H1 (cell line): ENCODE measurements at regions of chr12 and their contacts with region 1.

Region 1: DNA sequence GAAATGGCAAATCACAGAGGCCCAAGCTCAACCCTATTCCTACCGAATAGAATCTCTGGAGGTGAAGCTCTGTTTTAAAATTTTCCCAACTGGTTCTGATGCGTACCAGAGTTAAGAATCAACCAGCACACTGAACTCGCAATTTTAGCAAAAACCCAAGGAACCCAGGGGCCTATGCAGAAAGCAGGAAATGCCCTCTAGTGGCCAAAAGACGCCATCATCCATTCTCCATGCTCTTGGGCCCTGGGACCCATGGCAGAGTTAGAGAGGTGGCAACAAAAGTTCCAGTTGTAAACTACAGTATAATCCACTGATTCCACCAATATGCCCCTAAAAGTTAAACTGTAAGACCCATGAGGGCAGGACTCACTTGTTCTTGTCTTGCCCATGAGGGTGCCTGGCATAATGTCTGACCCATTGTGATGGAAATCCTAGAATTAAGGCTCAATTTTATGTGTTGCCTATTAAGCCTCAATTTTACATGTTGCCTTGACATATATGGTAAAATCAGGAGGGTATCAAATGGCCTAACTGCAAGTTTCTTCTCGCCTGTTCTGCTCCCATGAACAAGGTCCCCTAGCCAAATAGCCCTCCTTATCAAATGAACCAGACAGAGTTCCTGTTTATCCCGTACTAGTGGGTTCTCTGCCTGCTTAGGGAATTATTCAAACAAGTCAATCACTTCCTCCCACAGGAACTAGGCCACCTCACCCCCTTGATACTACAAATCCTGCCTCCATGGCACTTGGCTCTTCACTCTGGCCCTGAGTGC is 137.5 kb upstream of the CPM start:
- DNase-seq: peak; percentile 31 to 74
- H3K4me3 ChIP-seq: no peak overlapping the region
- H3K27ac ChIP-seq: no peak overlapping the region
- H3K4me1 ChIP-seq: peaks cover 0 to 6% (median 1%) of the 10 kb centered on the region in 4 experiments; a peak in 6 of 7 replicates
- H3K27me3 ChIP-seq: no peaks in the 10 kb centered on the region
- CTCF ChIP-seq: peak; percentile 76 to 96 (median 89)
- EP300 ChIP-seq: no peak
- POLR2A ChIP-seq: no peak
- RAD21 ChIP-seq: peak; percentile 89 to 94

Region 2: DNA sequence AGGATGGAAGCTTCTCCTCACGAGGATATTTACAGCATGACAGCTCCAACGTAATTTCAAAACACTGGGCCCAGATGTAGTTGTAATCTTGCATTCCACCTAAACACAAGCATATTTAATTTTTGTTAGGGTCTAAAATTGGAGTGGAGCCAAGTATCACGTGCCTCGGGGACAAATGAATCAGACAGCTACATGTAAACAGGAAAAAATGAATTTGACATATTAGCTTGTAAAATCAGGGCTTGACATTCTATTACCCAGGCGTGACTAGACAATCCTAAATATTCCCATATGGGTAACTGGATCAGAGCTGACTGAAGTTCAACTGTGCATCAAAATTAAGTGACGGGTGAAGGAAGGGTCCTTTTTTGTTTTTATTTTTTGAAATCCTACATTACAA is 203.6 kb before region 1 on chr12:
- CTCF ChIA-PET with region 1: interaction called, 29 read pairs
- POLR2A ChIA-PET with region 1: no interaction called
- DNase-seq: no peak
- H3K4me3 ChIP-seq: no peak overlapping the region
- H3K27ac ChIP-seq: no peak overlapping the region
- H3K4me1 ChIP-seq: peaks cover 2 to 5% (median 4%) of the 10 kb centered on the region in 4 experiments; a peak in 4 of 7 replicates
- H3K27me3 ChIP-seq: no peaks in the 10 kb centered on the region
- CTCF ChIP-seq: no peak
- EP300 ChIP-seq: no peak
- POLR2A ChIP-seq: no peak
- RAD21 ChIP-seq: no peak

Region 3: DNA sequence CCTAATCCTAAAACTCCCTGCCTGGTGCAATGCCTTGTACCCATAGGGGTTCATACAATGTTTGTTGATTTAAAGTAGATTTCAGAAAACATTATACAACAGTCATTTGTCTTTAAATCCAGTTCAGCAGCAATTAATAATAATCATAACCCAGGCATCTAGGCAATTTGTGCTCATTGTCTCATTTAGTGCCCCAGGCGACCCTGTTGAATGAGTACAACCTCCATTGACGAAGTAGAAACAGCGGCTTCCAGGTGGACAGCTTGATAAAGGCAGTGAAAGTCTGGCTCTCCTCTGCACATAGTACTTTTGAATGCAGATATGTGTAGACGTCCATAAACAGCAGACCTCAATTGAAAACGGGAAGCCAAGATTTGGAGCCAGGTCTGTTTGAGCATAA is 54.7 kb before region 1 on chr12:
- CTCF ChIA-PET with region 1: no interaction called
- POLR2A ChIA-PET with region 1: no interaction called
- DNase-seq: no peak
- H3K4me3 ChIP-seq: no peak overlapping the region
- H3K27ac ChIP-seq: no peak overlapping the region
- H3K4me1 ChIP-seq: no peaks in the 10 kb centered on the region
- H3K27me3 ChIP-seq: no peaks in the 10 kb centered on the region
- CTCF ChIP-seq: no peak
- EP300 ChIP-seq: no peak
- POLR2A ChIP-seq: no peak
- RAD21 ChIP-seq: no peak

Region 4: DNA sequence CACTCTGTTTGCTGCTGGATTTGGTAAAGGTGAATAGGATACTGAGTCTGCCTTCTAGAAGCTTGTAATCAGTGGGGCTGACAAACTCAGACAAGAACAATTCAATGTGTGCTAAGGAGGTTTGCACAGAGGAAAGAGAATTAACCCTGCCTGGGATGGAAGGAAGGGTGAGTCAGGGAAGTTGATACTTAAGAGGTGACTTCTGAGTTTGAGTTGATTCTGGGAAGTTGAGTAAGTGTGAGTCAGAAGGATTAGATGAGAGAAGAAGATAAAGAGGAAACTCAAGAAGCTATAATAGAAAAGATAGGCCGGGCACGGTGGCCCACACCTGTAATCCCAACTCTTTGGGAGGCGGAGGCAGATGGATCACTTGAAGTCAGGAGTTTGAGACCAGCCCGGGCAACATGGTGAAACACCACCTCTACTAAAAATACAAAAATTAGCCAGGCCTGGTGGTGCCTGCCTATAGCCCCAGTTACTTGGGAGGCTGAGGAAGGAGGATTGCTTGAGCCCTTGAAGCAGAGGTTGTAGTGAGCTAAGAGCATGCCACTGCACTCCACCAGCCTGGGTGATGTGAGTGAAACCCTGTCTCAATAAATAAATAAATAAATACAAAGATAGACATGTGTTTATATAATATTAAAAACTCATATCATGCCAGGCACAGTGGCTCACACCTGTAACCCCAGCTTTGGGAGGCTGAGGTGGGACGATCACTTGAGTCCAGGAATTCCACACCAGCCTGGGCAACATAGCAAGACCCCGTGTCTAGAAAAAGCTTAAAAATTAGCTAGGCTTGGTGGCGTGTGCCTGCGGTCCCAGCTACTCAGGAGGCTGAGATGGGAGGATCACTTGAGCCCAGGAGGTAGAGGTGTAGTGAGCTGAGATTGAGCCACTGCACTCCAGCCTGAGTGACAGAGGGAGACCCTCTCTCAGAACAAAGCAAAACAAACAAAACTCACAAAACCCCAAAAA is 10.7 kb before region 1 on chr12:
- CTCF ChIA-PET with region 1: interaction called, 21 read pairs
- POLR2A ChIA-PET with region 1: no interaction called
- DNase-seq: no peak
- H3K4me3 ChIP-seq: no peak overlapping the region
- H3K27ac ChIP-seq: no peak overlapping the region
- H3K4me1 ChIP-seq: peaks cover 0 to 3% (median 1%) of the 10 kb centered on the region in 4 experiments; a peak in 1 of 7 replicates
- H3K27me3 ChIP-seq: no peaks in the 10 kb centered on the region; a peak in 1 of 7 replicates
- CTCF ChIP-seq: no peak
- EP300 ChIP-seq: no peak
- POLR2A ChIP-seq: no peak
- RAD21 ChIP-seq: no peak

Region 5: GRCh38 chr12:69096669-69097335 is 26.3 kb after region 1 on chr12:
- CTCF ChIA-PET with region 1: no interaction called
- POLR2A ChIA-PET with region 1: no interaction called
- DNase-seq: no peak
- H3K4me3 ChIP-seq: no peak overlapping the region
- H3K27ac ChIP-seq: no peak overlapping the region
- H3K4me1 ChIP-seq: peaks cover 0 to 12% (median 5%) of the 10 kb centered on the region in 4 experiments; a peak in 3 of 7 replicates
- H3K27me3 ChIP-seq: no peaks in the 10 kb centered on the region
- CTCF ChIP-seq: no peak
- EP300 ChIP-seq: no peak
- POLR2A ChIP-seq: no peak
- RAD21 ChIP-seq: no peak